ENCODE measurements at regions of chr10 and their contacts with region 1.

Region 1: GRCh38 chr10:88019753-88020152 is 156.3 kb downstream of the PTEN start:
- DNase-seq: no peak
- H3K4me3 ChIP-seq: no peak overlapping the region
- H3K27ac ChIP-seq: no peak overlapping the region
- H3K4me1 ChIP-seq: no peaks in the 10 kb centered on the region
- H3K27me3 ChIP-seq: no peaks in the 10 kb centered on the region
- CTCF ChIP-seq: no peak
- POLR2A ChIP-seq: no peak

Region 2: GRCh38 chr10:88080213-88080612 is 60.5 kb after region 1 on chr10:
- intact Hi-C with region 1: no loop called
- DNase-seq: no peak
- H3K4me3 ChIP-seq: no peak overlapping the region
- H3K27ac ChIP-seq: no peak overlapping the region
- H3K4me1 ChIP-seq: peaks cover 26% of the 10 kb centered on the region
- H3K27me3 ChIP-seq: no peaks in the 10 kb centered on the region
- CTCF ChIP-seq: no peak
- POLR2A ChIP-seq: no peak

Region 3: GRCh38 chr10:89374713-89375141 is 1355.0 kb after region 1 on chr10:
- intact Hi-C with region 1: loop called (anchors 5 kb)
- DNase-seq: peak in 1 of 2 donors; percentile 85
- H3K4me3 ChIP-seq: no peak overlapping the region
- H3K27ac ChIP-seq: peak overlapping the region; percentile 76
- H3K4me1 ChIP-seq: peaks cover 19% of the 10 kb centered on the region
- H3K27me3 ChIP-seq: no peaks in the 10 kb centered on the region
- CTCF ChIP-seq: no peak
- POLR2A ChIP-seq: no peak

Measured in vagina (tissue), 2 donors.